ENCODE measurements at regions of chr1 and their contacts with region 1.

Region 1: DNA sequence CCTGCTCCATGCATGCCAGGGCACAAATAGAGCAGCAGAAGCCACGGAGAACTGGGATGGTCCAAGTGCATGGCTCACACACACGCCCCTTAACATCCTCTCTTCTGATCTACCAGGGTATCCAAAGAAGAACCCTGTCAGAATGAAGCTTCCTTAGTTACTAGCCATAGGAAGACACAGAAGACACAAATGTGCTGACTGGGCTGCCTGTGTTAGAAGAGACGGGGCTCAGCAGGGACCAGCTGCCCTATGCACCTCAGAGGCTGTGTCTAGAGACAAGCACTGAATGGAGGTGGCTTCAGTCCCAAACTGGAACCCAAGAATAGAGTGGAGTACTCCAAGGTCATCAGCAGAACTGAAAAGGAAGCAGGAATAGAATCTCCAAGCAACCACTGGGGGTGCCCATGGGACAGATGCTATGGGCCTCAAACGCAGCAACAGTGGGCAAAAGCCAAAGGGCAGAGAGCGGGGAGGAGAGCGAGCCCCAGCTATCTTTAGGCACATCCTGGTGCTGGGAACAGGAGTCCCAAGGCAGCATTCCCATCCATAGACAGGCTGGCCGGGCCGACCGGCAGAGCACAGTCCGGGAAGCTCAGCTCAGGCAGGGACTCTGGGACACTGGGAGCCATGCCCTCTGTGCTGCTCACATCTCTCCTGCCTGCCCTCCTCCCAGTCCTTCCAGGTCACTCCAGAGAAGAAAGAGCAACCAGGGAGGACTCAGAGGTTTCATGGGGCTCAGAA is 9.5 kb downstream of the SLC6A9 start:
- DNase-seq: no peak
- H3K4me3 ChIP-seq: no peak overlapping the region
- H3K27me3 ChIP-seq: no peaks in the 10 kb centered on the region
- CTCF ChIP-seq: no peak

Region 2: GRCh38 chr1:43991476-43992231 is 30.1 kb before region 1 on chr1 and contains the start of gene CCDC24:
- CTCF ChIA-PET with region 1: no interaction called
- POLR2A ChIA-PET with region 1: no interaction called
- DNase-seq: peak; percentile 40
- H3K4me3 ChIP-seq: peak within 1 kb of the TSS; percentile 68
- H3K27me3 ChIP-seq: no peaks in the 10 kb centered on the region
- CTCF ChIP-seq: no peak
- polyA plus RNA-seq, gene CCDC24: 0.98 and 2.0 TPM in 2 replicates

Region 3: DNA sequence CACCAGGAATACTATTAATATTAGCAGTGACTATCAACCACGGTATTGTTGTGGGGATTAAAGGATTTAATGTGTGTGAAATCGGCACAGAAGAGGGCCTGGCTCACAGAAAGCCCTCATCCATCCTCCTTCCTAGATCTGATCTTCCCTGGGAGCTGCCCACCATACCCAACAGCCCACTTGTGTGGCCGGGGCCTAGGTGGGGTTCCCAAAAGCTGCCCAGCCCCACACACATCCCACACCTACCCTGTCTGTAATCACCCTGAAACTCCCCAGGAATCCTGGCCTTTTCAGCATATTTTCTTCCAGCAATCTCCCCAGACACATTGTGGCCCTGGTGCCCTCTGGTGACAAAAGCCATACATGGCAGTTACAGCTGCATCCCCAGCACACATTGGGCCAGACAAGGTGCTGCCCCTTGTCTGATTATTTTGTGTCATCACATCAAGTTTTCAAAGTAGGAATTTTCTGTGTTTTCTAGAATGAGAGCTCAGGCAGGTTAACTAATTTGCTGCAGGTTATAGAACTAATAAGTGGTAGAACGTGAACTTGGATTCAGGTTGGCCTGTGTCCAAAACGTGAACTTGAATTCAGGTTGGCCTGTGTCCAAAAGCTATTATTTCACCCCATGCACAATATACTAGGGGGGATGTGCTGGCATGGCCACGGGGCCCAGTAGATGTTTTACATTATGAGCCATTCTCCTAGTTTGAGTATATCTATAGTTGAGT is 14.8 kb after region 1 on chr1:
- CTCF ChIA-PET with region 1: interaction called, 15 read pairs
- POLR2A ChIA-PET with region 1: no interaction called
- DNase-seq: no peak
- H3K4me3 ChIP-seq: no peak overlapping the region
- H3K27me3 ChIP-seq: no peaks in the 10 kb centered on the region
- CTCF ChIP-seq: peak; percentile 80

Measured in BJ (cell line).